ENCODE measurements at regions of chr17 and their contacts with region 1.

Region 1: DNA sequence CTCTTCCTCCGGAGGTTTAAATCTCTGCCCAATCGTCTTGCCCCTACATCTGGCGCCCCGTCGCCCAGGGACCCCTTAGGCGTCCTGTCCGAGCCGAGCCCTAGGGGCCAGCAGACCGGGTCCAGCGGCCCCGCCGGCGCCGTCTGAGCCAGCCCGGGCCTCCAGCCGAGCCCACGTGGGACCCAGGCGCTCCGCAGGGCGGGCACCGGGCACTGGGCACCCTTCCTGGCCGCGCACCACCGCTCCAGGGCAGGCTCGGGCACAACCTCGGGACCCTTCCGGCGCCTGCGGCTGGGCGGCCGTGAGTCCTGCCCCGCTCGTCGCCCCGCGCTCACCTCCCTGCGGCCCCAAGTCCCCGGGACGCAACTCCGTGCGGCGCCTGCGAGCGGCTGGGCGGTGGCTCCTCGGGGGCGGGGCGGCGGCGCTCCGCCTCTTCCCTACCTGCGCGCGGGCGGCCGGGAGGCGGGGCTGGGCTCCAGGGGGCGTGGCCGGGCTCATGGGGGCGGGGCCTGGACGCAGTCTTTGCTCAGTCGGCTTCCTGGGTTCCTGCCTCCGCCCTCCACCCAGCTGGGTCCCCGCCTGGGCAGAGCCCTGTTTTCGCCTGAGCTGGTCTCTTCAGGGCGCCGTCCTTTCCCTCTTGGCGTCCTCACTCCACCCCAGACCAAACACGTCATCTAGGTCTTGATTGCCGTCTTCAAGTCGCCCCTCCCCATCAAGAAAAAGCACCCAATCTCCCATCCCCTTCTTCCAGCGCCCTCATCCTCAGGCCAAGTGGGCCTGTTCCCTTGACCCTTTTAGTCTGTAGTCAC is at the start of gene RHBDF2:
- DNase-seq: peak; percentile 97
- CTCF ChIP-seq: no peak

Region 2: DNA sequence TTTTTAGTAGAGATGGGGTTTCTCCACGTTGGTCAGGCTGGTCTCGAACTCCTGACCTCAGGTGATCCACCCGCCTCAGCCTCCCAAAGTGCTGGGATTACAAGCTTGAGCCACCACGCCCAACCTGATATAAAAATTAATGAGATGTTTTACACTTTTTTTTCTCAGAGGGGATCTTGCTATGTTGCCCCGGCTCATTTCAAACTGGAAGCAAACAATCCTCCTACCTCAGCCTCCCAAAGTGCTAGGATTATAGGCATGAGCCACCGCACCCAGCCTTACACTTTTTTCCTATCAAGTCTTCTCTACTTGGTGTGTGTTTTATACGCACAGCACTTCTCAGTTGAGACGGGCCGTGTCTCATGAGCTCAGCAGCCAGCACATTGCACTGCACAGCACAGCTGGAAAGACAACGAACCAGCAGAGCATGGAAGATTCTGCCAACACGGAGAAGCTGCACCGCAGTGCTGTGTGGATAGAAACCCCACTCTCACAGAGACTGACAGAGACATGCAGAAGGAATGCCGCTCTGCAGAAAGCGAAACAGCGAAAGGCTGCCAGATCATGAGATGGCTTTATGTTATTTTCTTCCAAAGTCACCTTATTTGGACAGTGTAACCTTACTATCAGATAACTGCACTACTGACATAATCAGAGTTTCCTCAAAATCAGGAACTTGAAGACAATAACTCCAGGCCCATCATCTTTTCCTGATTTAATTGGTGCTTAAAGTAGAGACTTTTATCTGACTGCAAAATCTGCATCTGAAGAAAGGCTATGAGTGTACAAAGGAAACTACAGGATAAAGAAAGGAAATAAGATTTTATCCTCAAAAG is 186.6 kb before region 1 on chr17:
- CTCF ChIA-PET with region 1: no interaction called
- POLR2A ChIA-PET with region 1: interaction called, 10 read pairs
- DNase-seq: no peak
- CTCF ChIP-seq: no peak

Region 3: DNA sequence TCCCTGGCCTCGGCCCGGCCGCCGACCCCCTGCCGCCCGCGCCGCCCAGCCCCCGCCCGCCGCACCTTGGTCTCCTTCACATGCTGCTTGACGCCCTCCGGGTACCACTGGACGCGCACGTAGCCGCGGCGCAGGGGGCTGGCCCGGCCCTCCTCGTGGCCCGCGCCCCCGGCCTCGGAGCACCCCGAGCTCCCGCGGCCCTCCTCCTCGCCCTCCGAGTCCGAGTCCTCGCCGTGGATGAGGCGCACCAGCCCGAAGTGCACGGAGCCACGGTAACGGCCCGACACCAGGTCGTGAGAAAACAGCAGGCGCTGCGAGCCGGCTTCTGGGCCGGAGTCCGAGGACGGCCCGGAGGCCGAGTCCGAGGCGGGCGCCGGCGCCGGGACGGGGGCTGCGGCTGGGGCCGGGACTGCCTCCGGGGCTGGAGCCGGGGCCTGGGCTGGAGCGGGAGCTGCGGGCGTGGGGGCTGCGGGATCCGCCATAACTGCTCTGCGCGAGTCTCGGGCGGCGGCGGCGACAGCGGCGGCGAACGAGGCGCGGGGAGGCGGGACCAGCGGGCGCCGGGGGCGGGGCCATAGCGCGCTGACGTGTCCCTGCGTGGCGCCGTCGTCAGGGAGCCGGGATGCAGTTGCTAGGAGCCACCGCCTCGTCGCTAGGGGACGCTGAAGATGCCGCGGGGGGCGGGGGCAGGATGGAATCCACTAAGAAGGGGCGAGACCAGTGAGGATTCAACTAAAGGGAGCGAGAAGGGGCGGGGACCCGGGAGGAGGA is 48.4 kb before region 1 on chr17 and contains the start of gene UBE2O:
- CTCF ChIA-PET with region 1: interaction called, 496 read pairs
- POLR2A ChIA-PET with region 1: no interaction called
- DNase-seq: peak; percentile 99
- CTCF ChIP-seq: peak; percentile 63

Region 4: DNA sequence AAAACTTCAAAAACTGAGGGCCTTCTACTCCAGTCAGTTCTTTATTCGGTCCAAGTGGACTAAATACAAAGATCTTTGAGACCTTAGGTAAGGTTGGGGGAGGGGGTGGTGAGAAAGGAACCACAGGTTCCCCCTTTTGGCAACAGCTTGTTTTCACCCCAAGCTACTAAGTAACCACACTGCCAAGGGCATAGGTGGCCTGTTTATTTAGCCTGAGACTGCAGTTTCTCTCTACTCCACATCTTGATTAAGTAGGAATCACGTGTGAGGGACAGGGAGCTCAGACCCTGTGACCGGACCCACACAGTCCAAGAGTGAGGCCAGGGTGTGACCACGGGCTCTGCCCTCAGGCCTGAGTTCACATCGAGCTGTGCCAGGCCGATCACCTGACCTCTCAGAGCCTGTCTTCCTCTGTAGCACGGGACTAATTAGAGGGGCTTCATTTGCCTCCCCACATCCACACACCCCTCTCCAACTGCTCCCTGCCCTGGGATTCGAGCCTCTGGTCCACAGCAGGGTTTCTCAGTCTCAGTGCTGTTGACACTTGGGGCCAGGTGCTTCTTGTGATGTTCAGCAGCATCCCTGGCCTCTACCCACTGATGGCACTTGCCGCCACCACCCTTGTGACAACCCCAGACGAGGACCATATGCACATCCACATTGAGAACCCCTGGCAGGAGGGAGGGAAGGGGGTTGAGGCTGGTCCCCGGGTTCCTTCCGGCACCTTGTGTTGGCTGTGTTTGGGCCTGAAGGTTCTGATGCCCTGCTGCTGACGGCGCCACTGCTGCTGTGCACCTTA is 66.6 kb after region 1 on chr17:
- CTCF ChIA-PET with region 1: no interaction called
- POLR2A ChIA-PET with region 1: no interaction called
- DNase-seq: no peak
- CTCF ChIP-seq: no peak

Region 5: GRCh38 chr17:76671123-76671911 is 170.1 kb after region 1 on chr17:
- CTCF ChIA-PET with region 1: no interaction called
- POLR2A ChIA-PET with region 1: no interaction called
- DNase-seq: peak; percentile 99
- CTCF ChIP-seq: no peak

Measured in GM10248 (cell line).